ENCODE measurements at regions of chr11 and their contacts with region 1.

Region 1: DNA sequence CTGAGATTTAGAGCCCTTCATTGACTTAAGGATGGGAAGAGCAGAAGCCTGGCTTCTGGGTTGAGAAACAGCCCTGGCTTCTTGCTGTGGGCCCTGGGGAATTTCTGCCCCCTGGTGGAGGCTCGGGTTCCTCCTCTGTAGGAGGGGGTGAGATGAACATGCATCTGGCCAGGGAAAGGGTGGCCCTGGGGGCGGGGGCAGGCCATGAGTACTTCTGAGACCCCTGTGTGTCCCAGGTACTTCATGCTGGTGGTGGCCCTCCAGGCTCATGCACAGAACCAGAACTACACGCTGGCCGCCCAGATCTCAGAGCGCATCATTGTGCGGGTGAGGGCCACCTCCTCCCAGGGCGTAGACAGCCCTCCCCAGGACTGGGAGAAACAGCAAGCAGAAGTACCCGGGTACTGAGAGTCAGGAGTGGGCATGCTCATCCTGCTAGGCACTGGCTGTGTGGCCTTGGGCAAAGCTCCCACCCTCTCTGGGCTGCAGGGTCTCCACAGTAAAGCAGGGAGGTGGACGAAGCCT is 15.8 kb downstream of the TMEM258 start:
- DNase-seq: peak; percentile 59
- H3K4me3 Mint-ChIP-seq: no peak overlapping the region
- H3K27ac Mint-ChIP-seq: no peak overlapping the region
- H3K4me1 Mint-ChIP-seq: no peaks in the 10 kb centered on the region
- H3K27me3 Mint-ChIP-seq: no peaks in the 10 kb centered on the region
- CTCF ChIP-seq: peak; percentile 69

Region 2: GRCh38 chr11:61693897-61694729 is 82.5 kb before region 1 on chr11:
- CTCF ChIA-PET with region 1: no interaction called
- POLR2A ChIA-PET with region 1: no interaction called
- intact Hi-C with region 1: no loop called
- DNase-seq: peak; percentile 62
- H3K4me3 Mint-ChIP-seq: no peak overlapping the region
- H3K27ac Mint-ChIP-seq: peak overlapping the region; percentile 71
- H3K4me1 Mint-ChIP-seq: peaks cover 31% of the 10 kb centered on the region
- H3K27me3 Mint-ChIP-seq: no peaks in the 10 kb centered on the region
- CTCF ChIP-seq: no peak

Region 3: DNA sequence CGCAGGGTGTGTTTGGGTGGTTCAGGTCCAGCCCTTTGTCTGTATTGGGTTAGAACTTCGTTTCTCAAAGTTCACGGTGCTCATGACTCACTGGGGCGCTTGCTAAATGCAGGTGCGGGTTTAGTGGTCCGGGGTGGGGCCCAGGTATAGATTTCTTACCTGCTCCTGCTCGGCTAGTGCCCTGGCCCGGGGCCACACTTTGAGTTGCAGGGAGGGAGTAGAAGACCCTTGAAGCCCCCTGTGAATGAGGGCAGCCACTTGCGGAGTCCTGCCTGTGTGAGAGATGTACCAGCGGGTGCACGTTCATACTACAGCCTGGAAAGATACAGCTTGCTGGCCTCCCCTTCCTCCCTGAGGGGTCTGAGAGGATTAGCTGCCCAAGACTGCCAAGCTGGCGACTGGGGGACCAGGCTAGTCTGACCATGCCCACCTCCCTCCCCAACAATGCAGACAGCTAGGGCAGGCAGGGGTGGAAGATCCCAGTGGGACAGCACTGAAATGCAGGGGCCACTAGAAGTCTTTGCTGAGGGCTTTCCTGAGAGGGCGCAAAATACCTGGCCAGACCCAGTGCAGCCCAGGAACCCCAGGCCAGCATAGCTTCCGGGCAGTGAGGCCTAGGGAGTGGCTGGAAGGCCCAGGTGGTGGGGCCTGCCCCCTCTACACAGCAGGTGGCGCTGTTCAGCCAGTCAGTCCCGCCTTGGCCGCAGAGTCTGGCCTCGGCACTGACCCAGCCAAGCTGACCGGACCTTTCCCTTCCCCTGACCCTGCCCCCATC is 29.2 kb before region 1 on chr11:
- CTCF ChIA-PET with region 1: interaction called, 12 read pairs
- POLR2A ChIA-PET with region 1: no interaction called
- intact Hi-C with region 1: loop called (anchors 1 kb)
- DNase-seq: peak; percentile 69
- H3K4me3 Mint-ChIP-seq: no peak overlapping the region
- H3K27ac Mint-ChIP-seq: no peak overlapping the region
- H3K4me1 Mint-ChIP-seq: no peaks in the 10 kb centered on the region
- H3K27me3 Mint-ChIP-seq: no peaks in the 10 kb centered on the region
- CTCF ChIP-seq: peak; percentile 84